ENCODE measurements at regions of chr13 and their contacts with region 1.

Region 1: GRCh38 chr13:106536244-106537034 is 977 bp upstream of the EFNB2 start:
- DNase-seq: peak; percentile 62 to 74
- ATAC-seq: peak; percentile 68 to 83
- H3K4me3 ChIP-seq: peak overlapping the region; percentile 59
- H3K27ac ChIP-seq: peak overlapping the region in 1 of 2 experiments; percentile 56; a peak in 3 of 6 replicates
- H3K4me1 ChIP-seq: no peaks in the 10 kb centered on the region
- CTCF ChIP-seq: peak; percentile 81
- EP300 ChIP-seq: no peak
- POLR2A ChIP-seq: no peak
- RAD21 ChIP-seq: peak; percentile 73 to 81

Region 2: DNA sequence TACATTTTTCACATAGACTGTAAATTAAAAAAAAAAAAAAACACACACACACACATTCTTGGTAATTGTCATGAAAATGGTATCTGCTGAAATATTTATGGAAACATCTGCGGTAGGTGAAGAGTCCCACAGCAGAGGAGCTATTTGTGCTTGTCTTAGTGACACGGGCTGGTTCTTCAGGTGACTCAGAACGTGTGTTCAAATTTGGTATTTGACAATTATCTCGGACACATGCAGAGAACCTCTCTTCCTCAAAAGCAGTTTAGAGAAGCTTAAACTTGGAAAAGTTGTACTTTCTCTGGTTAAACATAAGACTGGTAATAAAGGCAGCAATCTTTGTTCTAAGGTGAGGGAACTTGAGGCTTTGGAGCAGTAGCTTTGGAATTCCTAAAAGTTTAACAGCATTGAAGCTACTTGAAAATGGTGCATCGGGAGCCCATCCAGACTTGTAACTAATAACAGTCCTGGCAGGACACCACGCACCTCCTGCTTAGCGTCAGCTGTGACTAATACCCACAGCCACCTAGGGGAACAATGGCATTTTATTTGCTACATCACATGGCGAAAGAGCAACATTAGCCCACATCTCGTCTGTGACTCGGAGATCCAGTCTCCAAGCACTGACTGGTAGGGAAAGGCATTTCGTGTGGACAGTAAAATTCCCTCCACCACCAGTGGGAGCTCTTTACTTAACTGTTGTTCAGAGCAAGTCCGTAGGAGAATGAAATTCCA is 1965.1 kb before region 1 on chr13:
- CTCF ChIA-PET with region 1: interaction called, 24 read pairs
- POLR2A ChIA-PET with region 1: no interaction called
- DNase-seq: peak; percentile 5 to 42
- ATAC-seq: peak; percentile 77 to 85
- H3K4me3 ChIP-seq: no peak overlapping the region
- H3K27ac ChIP-seq: no peak overlapping the region
- H3K4me1 ChIP-seq: no peaks in the 10 kb centered on the region
- CTCF ChIP-seq: peak; percentile 43
- EP300 ChIP-seq: no peak
- POLR2A ChIP-seq: no peak
- RAD21 ChIP-seq: peak; percentile 52 to 53; a peak in 4 of 5 replicates

Region 3: DNA sequence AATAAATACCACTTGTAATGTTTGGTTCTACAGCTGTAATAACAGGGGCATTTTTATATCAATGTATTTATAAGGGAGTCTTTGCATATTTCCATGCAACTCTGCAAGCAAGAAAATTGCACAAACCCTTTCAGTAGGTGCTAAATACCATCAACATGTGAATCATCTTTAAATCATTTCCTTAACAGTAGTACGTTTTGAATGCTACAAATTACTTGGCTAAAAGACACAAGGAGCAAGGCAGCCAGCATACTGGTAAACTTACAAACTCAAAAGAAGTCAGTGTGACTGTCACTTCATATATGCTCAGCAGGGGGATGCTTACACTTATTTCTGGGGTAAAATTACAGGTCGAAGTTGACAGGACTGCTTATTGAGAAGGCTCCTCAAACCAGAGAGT is 403.4 kb before region 1 on chr13:
- CTCF ChIA-PET with region 1: no interaction called
- POLR2A ChIA-PET with region 1: no interaction called
- DNase-seq: no peak
- ATAC-seq: no peak
- H3K4me3 ChIP-seq: no peak overlapping the region
- H3K27ac ChIP-seq: no peak overlapping the region
- H3K4me1 ChIP-seq: peaks cover 17% of the 10 kb centered on the region
- CTCF ChIP-seq: no peak
- EP300 ChIP-seq: no peak
- POLR2A ChIP-seq: no peak
- RAD21 ChIP-seq: no peak

Region 4: DNA sequence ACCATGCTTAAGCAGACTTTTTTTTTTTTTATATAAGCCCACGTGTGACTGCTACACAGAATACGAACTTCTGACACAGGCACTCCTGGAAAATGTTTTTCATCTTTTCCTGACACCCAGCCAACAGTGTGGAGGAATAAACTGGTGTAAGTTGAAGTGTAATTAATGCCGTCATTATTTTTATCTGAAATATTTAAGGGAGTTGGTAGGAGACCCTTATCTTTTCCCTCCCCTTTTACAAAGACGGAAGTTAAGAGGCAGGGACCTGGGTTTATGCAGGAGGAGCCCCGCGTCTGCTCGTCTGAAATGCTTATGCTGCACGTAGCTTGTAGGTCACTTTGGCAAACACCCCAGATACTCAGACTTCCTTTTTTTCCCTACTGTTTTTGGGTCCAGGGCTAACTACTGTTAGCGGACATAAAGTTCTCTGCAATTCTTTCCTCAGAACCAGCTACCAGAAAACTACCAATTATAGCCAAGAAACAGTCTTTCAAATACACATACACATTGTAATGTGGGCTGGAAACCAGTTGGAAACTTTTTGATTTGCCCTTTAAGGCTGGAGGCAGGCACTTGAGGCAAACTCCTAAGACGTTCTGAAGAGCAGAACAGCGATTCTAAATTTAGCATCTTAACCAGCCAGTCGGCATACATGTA is 51.8 kb before region 1 on chr13:
- CTCF ChIA-PET with region 1: no interaction called
- POLR2A ChIA-PET with region 1: no interaction called
- DNase-seq: no peak
- ATAC-seq: no peak
- H3K4me3 ChIP-seq: no peak overlapping the region
- H3K27ac ChIP-seq: no peak overlapping the region
- H3K4me1 ChIP-seq: no peaks in the 10 kb centered on the region
- CTCF ChIP-seq: no peak
- EP300 ChIP-seq: no peak
- POLR2A ChIP-seq: no peak
- RAD21 ChIP-seq: no peak

Region 5: GRCh38 chr13:106515635-106516254 is 20.7 kb before region 1 on chr13:
- CTCF ChIA-PET with region 1: no interaction called
- POLR2A ChIA-PET with region 1: no interaction called
- DNase-seq: no peak
- ATAC-seq: no peak
- H3K4me3 ChIP-seq: no peak overlapping the region
- H3K27ac ChIP-seq: no peak overlapping the region
- H3K4me1 ChIP-seq: no peaks in the 10 kb centered on the region
- CTCF ChIP-seq: no peak
- EP300 ChIP-seq: no peak
- POLR2A ChIP-seq: no peak
- RAD21 ChIP-seq: no peak

Region 6: GRCh38 chr13:106548064-106548696 is 11.7 kb after region 1 on chr13:
- CTCF ChIA-PET with region 1: interaction called, 11 read pairs
- POLR2A ChIA-PET with region 1: no interaction called
- DNase-seq: peak in 1 of 2 experiments; percentile 37
- ATAC-seq: peak; percentile 70 to 82
- H3K4me3 ChIP-seq: no peak overlapping the region
- H3K27ac ChIP-seq: no peak overlapping the region
- H3K4me1 ChIP-seq: peaks cover 21% of the 10 kb centered on the region
- CTCF ChIP-seq: no peak
- EP300 ChIP-seq: no peak
- POLR2A ChIP-seq: no peak
- RAD21 ChIP-seq: no peak